Activated CD8-positive, alpha-beta T cell treated with anti-CD3 and anti-CD28 coated beads for 36 hours (primary cell): ENCODE measurements at regions of chr16 and their contacts with region 1.

Region 1: GRCh38 chr16:22001591-22001990 is 675 bp upstream of the PDZD9 start:
- DNase-seq: no peak
- ATAC-seq: no peak
- H3K4me3 Mint-ChIP-seq: peak overlapping the region; percentile 31
- H3K27ac Mint-ChIP-seq: no peak overlapping the region
- H3K4me1 Mint-ChIP-seq: peaks cover 10% of the 10 kb centered on the region
- H3K27me3 Mint-ChIP-seq: no peaks in the 10 kb centered on the region
- CTCF ChIP-seq: no peak

Region 2: GRCh38 chr16:21989133-21989532 is 12.5 kb before region 1 on chr16:
- CTCF ChIA-PET with region 1: interaction called, 12 read pairs
- POLR2A ChIA-PET with region 1: interaction called, 7 read pairs
- intact Hi-C with region 1: no loop called
- DNase-seq: no peak
- ATAC-seq: no peak
- H3K4me3 Mint-ChIP-seq: no peak overlapping the region
- H3K27ac Mint-ChIP-seq: no peak overlapping the region
- H3K4me1 Mint-ChIP-seq: peaks cover 11% of the 10 kb centered on the region
- H3K27me3 Mint-ChIP-seq: no peaks in the 10 kb centered on the region
- CTCF ChIP-seq: no peak